Cardiac septum (tissue), 1 donor: ENCODE measurements at regions of chr12 and their contacts with region 1.

Region 1: GRCh38 chr12:123106628-123107359 is 44.1 kb downstream of the PITPNM2 start:
- DNase-seq: no peak

Region 2: GRCh38 chr12:123141615-123142517 is 35.1 kb after region 1 on chr12:
- intact Hi-C with region 1: loop called (anchors 5 kb)
- DNase-seq: no peak